PC-9 (cell line): ENCODE measurements at regions of chr2 and their contacts with region 1.

Region 1: GRCh38 chr2:9057939-9058761 is 54.7 kb upstream of the MBOAT2 start:
- DNase-seq: peak in 1 of 2 experiments; percentile 45
- H3K4me3 ChIP-seq: no peak overlapping the region
- H3K27ac ChIP-seq: no peak overlapping the region; the same call in 1 of the 2 replicates
- H3K4me1 ChIP-seq: peaks cover 7% of the 10 kb centered on the region
- H3K27me3 ChIP-seq: no peaks in the 10 kb centered on the region
- CTCF ChIP-seq: no peak

Region 2: DNA sequence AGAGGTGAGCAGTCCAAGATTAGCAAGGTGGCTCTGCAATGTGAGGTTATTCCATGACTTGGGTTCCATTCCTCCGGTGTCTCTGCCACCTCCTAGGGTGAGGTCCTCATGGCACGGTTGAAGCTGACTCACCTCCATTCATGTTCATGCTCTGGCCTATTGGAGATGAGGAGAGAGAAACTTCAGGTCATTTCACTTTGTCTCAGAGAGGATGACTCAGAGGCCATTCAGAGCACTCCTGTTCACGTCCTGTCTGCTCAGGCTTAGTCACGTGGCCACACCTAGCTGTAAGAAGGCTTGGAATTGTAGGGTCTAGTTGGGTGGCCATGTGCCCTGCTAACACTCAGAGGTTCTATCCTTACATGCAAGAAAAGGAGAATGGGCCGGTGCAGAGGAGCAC is 12.9 kb after region 1 on chr2:
- CTCF ChIA-PET with region 1: no interaction called
- POLR2A ChIA-PET with region 1: no interaction called
- intact Hi-C with region 1: loop called (anchors 1 kb)
- DNase-seq: peak; percentile 68 to 98
- H3K4me3 ChIP-seq: 0 out of 2 replicates have a peak overlapping the region, but pooled peaks have one; percentile 17
- H3K27ac ChIP-seq: peak overlapping the region; percentile 88
- H3K4me1 ChIP-seq: peaks cover 41% of the 10 kb centered on the region
- H3K27me3 ChIP-seq: no peaks in the 10 kb centered on the region
- CTCF ChIP-seq: no peak

Region 3: DNA sequence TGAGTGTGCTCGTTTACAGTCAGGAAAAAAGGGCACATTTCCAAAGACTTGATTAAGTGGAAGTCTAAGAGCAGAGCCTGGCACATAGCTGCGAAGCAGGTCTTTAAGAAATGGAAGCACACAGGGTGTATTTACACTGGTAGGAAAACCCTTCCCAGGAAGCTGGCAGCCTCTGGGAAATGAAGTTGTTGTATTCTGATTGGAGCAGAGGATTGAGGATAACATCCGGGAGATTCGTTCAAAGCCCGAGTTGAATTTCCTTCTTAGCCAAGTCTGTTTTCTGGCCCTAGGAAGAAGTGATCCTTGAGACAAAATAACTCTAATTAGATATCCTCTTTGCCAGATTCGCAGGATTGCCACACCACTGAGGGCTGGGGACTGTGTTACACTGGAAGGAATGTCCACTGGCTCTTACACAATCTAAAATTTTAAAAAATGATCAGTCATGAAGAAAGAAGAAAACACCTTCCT is 289.3 kb after region 1 on chr2:
- CTCF ChIA-PET with region 1: no interaction called
- POLR2A ChIA-PET with region 1: no interaction called
- intact Hi-C with region 1: no loop called
- DNase-seq: no peak
- H3K4me3 ChIP-seq: no peak overlapping the region
- H3K27ac ChIP-seq: no peak overlapping the region
- H3K4me1 ChIP-seq: no peaks in the 10 kb centered on the region
- H3K27me3 ChIP-seq: no peaks in the 10 kb centered on the region
- CTCF ChIP-seq: no peak